HAP-1 (cell line): ENCODE measurements at regions of chr1 and their contacts with region 1.

Region 1: DNA sequence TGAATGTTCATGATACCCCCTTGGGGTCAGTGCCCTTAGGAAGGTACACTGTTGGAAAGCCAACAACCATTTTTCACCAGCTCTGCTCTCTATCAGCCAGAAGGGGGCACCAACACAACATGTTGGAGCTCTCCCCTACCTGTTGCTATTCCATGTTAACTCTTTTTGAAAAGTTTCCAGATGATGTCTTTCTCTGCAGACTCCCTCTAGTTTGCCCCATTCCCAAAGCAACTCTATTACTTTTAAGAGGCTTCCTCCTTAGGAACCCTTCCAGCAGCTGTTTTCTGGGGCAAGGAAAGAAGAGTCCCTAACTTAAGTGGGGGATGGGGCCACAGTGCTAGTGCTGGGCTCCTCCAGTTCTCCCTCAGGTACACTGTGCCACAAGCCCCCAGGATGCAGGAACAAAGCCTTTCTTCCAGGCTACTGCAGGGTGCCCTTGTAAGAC is 22.9 kb upstream of the NDC1 start:
- DNase-seq: peak; percentile 60 to 69
- H3K4me3 ChIP-seq: no peak overlapping the region
- H3K4me1 ChIP-seq: no peaks in the 10 kb centered on the region
- H3K27me3 ChIP-seq: no peaks in the 10 kb centered on the region

Region 2: GRCh38 chr1:53959664-53960250 is 98.8 kb after region 1 on chr1:
- in situ Hi-C with region 1: loop called (anchors 5 kb)
- DNase-seq: no peak
- H3K4me3 ChIP-seq: no peak overlapping the region
- H3K4me1 ChIP-seq: peaks cover 27% of the 10 kb centered on the region
- H3K27me3 ChIP-seq: no peaks in the 10 kb centered on the region

Region 3: DNA sequence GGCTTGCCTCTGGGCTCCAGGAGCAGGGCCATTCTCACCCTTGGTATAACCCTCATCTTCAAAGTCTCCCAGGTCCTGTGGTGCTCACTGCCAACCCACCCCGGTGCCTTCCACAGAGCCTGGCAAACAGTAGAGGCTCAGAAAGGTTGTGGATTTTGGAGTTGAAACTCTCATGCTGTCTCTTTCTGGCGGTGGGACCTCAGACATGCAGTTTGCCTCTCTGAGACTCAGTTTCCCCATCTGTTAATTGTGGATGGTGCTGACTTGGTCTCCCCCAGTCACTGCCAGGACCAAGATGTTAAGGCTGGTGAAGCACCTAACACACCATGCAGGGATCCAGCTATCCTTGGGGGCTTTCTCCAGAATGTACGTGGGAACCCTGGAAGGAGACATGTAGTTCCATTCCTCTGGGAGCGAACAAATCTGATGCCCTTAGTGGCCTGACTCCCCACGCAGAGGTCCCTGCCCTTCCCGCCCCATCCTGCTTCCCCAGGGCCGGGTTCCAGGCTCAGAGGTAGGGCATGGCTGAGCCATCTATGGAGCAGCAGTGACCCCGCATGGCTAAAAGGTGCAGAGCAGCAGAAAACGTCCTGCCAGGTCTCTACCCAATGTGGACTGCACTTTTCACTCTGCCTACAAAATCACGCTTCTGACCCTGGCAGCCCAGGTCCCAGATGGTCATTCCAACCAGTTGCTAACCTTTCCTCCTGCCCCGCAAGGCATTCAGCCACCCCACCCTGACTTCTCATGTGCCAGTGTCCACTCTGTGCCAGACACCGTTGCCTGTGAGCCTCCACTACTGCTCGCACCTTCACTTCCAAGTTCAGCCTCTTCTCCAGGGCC is 949.3 kb after region 1 on chr1:
- in situ Hi-C with region 1: loop called (anchors 25 kb)
- DNase-seq: peak; percentile 52 to 86
- H3K4me3 ChIP-seq: no peak overlapping the region
- H3K4me1 ChIP-seq: no peaks in the 10 kb centered on the region
- H3K27me3 ChIP-seq: no peaks in the 10 kb centered on the region